Esophagus squamous epithelium (tissue), 5 donors: ENCODE measurements at regions of chr22 and their contacts with region 1.

Region 1: DNA sequence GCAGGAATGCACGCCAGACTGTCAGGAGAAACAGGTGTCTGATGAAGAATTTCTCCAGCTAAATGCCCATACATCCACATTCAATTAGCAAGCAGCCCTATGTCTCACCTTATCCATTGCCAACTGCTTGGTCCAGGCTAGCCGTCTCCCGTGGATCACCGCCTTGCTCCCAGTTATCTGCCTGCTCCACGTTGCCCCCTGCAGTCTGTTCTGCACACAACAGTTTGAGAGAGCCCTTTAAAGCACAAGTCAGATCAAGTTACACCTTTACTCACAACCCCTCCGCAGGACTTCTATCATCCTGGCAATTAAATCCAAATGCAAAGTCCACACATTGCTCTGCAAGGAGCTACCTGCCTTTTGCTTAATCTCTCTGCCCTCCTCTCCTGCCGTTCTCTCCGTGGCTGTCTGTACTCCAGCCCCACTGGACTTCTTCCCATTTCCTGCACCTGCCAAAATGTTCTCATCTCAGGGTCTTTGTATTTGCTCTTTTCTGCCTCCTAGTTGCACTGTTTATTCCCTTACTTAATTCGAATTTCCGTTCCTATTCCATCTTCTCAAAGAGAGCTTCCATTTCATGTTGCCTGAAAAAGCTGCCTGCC is 185.3 kb upstream of the LARGE1 start:
- DNase-seq: no peak
- H3K4me3 ChIP-seq: no peak overlapping the region
- H3K27ac ChIP-seq: no peak overlapping the region
- H3K4me1 ChIP-seq: no peaks in the 10 kb centered on the region
- H3K27me3 ChIP-seq: peaks cover 0 to 28% (median 0%) of the 10 kb centered on the region in 4 donors
- CTCF ChIP-seq: peak in 4 of 6 experiments; percentile 41 to 62 (median 44)
- POLR2A ChIP-seq: no peak

Region 2: GRCh38 chr22:33302049-33302545 is 803.5 kb before region 1 on chr22:
- intact Hi-C with region 1: loop called (anchors 10 kb)
- DNase-seq: peak; percentile 8
- H3K4me3 ChIP-seq: peak overlapping the region in 1 of 4 donors; percentile 4
- H3K27ac ChIP-seq: no peak overlapping the region
- H3K4me1 ChIP-seq: peaks cover 0 to 25% (median 4%) of the 10 kb centered on the region in 3 donors
- H3K27me3 ChIP-seq: no peaks in the 10 kb centered on the region
- CTCF ChIP-seq: peak; percentile 76 to 92 (median 89)
- POLR2A ChIP-seq: no peak

Region 3: DNA sequence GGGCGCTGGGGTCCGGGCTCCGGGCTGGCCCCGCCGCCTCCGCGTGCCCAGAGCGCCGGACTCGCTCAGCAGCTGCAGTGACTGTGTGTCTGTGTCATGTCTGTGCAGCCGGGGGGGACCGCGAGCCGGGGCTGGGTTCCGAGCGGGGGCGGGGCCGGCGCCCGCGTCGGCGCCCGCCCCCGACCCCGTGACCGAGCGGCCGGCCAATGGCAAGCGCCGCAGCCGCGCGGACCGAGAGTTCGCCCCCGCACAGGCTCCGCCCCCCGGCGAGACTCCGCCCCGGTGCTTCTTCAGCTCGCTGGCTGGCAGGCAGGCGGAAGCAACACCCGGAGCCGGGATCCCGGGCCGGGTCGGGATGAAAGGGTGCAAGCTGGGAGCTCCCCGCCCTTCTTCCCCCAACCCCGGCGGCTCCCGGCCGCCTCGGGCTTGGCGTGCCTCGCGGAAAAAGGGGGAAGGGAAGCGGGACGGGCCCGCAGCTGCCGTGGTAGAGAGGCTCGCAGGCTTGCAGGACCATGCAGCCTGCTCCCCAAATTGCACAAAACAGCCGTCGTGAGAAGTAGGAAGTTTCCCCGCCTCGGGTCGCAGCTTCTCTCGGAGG is 184.5 kb before region 1 on chr22:
- intact Hi-C with region 1: loop called (anchors 10 kb)
- DNase-seq: peak; percentile 63
- H3K4me3 ChIP-seq: peak overlapping the region; percentile 44 to 81 (median 70)
- H3K27ac ChIP-seq: peak overlapping the region; percentile 70 to 90 (median 83)
- H3K4me1 ChIP-seq: peaks cover 3 to 57% (median 20%) of the 10 kb centered on the region in 3 donors
- H3K27me3 ChIP-seq: peaks cover 0 to 41% (median 0%) of the 10 kb centered on the region in 4 donors
- CTCF ChIP-seq: peak in 1 of 6 experiments; percentile 13
- POLR2A ChIP-seq: peak in 2 of 4 donors; percentile 85 to 88